ENCODE measurements at regions of chr1 and their contacts with region 1.

Region 1: DNA sequence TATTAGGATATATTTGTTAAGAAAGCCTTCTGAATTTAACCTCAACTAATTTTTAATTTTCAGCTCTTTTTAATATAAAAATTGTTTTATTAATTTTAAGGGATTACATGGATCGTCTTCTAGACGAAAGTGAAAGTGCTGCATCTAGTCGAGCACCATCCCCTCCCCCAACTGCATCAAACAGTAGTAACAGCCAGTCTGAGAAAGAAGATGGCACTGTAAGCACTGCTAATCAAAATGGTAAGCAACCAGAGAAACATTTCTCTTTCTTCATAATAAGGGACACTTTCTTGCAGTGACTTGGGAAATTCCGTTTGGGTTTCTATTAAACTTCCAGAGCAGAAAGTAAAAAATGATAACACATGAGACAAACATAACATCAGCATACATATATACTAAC is 56.9 kb downstream of the MIER1 start:
- DNase-seq: peak; percentile 50
- H3K4me3 ChIP-seq: peak overlapping the region; percentile 31
- H3K27ac ChIP-seq: peak overlapping the region; percentile 41
- H3K4me1 ChIP-seq: peaks cover 53% of the 10 kb centered on the region
- CTCF ChIP-seq: no peak

Region 2: DNA sequence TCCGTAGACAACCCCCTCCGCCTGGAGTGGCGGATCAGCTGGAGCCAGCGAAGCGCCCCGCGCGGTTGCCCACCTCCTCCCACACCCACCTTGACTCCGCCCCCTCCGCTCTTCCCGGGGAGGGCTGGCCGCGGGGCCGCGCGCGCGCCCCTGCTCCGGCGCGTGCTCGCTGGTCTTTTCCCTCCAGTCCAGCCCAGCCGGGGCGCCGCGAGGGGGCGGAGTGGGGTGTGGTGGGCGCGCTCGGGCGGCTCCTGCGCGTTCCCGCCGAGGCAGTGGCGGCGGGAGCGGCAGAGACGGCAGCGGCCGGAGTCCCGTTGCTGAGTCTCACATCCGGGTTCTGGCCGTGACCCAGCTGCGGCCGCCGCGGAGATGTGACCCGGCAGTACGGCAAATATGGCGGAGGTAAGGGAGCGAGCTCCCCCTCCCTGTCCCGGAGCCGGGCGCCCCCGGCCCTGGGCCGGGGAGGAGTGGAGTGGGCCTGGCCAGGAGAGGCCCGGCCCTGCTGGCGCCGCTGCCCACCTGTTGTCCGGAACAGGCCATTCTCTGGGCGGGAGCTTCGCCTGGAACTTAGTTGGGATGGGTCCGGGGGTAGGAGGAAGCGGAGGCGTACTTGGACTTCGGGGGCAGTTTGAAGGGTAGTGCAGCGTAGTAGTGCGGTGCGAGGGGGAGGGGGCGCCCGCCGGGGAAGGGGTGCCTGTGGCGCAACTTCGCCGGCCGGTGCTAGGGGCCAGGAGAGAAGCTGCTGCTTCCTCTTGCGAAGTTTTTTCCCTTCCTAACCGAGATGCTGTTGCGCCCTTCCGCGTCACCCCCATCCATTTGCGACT is 51.5 kb before region 1 on chr1:
- CTCF ChIA-PET with region 1: no interaction called
- POLR2A ChIA-PET with region 1: interaction called, 4 read pairs
- intact Hi-C with region 1: loop called (anchors 5 kb)
- DNase-seq: peak; percentile 96
- H3K4me3 ChIP-seq: peak overlapping the region; percentile 98
- H3K27ac ChIP-seq: peak overlapping the region; percentile 86
- H3K4me1 ChIP-seq: peaks cover 60% of the 10 kb centered on the region
- CTCF ChIP-seq: peak; percentile 36; the same call in 1 of the 2 replicates

Region 3: DNA sequence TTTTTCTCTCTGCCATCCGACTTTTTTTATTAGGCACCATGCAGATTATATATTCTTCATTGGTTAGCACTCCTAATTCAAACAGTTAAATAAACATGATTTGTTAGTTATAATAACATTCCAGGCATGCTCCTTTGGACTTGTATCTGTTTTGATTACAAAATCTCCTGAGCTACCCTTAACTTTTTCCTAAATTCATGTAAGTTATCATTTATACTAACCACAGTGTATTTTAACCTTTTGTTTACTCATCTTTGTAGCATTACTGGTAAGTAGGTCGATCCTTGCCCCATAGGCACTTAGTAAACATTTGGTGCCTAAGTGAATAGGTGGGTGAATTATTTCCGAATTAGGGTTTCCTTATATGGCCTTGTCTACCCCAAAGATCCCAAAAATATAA is 13.1 kb before region 1 on chr1:
- CTCF ChIA-PET with region 1: no interaction called
- POLR2A ChIA-PET with region 1: interaction called, 10 read pairs
- intact Hi-C with region 1: no loop called
- DNase-seq: no peak
- H3K4me3 ChIP-seq: no peak overlapping the region
- H3K27ac ChIP-seq: no peak overlapping the region
- H3K4me1 ChIP-seq: no peaks in the 10 kb centered on the region
- CTCF ChIP-seq: no peak

Region 4: DNA sequence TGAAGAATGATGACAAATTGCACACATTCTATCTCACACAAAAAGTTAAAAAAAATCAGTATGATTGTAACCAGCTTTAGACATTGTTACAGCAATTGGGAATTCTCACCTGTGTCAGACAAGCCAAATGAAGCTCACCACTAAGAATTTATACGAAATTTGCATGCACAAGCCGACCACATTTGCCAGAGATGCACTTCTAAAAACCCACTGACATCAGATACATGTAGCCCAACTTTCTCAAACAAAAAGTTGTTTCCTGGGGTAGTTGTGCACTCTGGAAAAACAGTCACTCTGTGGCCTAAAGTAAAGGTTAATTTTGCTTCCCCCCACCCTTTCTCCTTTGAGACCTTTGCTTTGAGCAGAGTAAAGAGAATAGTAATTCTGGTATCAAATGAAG is 258.1 kb after region 1 on chr1:
- CTCF ChIA-PET with region 1: no interaction called
- POLR2A ChIA-PET with region 1: no interaction called
- intact Hi-C with region 1: no loop called
- DNase-seq: no peak
- H3K4me3 ChIP-seq: no peak overlapping the region
- H3K27ac ChIP-seq: no peak overlapping the region
- H3K4me1 ChIP-seq: no peaks in the 10 kb centered on the region
- CTCF ChIP-seq: no peak